ENCODE measurements at regions of chr14 and their contacts with region 1.

Region 1: DNA sequence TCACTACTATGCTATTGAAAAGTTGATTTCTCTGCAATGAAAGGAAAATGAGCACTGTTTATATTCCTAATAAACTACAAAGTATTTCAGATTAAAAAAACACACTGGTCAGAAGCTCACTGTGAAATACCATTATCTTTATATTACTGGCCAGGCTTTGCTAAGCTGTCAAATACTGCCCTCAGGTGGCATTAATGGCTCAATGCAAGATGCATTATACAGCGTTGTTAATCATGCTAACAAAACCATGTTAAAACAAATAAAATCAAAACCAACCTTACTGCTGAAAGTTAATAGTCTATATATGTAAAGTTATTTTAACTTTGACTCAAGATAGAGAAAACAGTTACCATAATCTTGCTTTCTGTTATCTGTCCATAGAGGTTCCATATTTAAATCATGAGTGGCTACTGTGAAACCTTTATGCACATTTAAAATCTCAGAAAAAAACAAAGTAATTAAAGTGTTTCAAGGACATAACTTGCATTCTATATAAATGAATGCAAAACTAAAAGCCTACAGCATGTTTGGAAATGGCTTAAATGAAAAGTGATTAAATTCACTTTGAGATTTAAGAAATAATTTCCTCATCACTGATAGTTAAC is 121.7 kb downstream of the RALGAPA1 start:
- DNase-seq: peak; percentile 62

Region 2: GRCh38 chr14:35438910-35439713 is 248.3 kb before region 1 on chr14:
- in situ Hi-C with region 1: loop called (anchors 25 kb)
- DNase-seq: no peak

Region 3: DNA sequence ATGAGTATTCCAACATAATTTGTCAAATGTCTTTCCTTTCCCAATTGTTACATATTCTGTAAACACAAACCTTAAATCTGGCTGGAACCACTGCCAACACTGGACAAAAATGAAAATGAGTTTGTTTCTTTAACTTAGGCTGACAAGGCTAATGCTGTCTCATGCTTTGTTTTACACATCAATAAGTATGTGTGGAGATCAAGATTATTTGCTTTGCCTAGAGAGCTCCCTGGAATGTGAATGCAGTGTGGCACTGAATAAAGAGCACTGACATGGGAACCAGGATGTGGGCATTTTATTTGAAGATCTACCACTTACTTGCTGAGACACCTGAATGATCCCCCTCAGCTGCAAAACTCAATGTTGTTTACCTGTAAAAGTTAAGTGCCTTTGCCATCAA is 59.9 kb after region 1 on chr14:
- in situ Hi-C with region 1: no loop called
- DNase-seq: no peak

Measured in G401 (cell line).